Sciatic nerve (tissue), 2 donors: ENCODE measurements at regions of chr20 and their contacts with region 1.

Region 1: DNA sequence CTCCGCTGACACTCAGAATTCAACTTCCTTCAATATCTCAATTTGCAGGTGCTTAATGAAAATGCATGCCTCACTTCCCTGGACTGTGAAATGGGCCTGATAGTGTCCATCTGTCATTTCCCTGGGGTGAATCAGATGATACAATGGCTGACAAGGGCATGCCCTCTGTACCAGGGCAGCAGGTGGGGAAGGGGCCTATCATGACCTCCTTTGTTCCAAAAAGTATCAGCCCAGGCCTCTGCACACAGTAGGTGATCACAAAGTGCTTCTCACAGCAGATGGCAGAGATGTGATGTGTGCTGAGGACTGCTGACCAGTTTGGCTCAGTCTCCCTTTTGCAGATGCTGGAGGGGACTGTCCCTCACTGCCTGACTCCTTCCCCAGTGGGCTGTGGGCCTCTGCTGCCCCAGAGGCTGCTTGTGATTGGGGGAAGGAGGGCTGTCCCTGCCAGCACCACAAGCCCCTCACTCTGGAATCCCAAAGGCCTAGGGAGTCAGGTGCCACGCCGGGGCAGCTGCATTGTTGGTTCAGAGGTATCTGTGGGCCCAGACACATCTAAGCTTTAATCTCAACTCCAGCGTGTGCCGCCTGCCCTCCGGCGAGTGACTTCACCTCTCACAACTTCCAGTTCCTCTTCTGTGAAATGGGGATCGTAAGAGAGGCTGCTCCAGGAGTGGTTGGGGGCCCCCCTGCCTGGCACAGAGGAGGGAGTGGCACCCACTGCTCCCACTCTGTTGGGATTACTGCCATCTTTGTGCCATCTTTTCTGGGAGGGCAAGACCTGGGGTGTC is 44.5 kb downstream of the DLGAP4 start:
- DNase-seq: no peak
- ATAC-seq: no peak

Region 2: GRCh38 chr20:36368869-36369268 is 18.2 kb after region 1 on chr20:
- intact Hi-C with region 1: loop called (anchors 1 kb)
- DNase-seq: no peak
- ATAC-seq: no peak